B cell (primary cell): ENCODE measurements at regions of chr1 and their contacts with region 1.

Region 1: DNA sequence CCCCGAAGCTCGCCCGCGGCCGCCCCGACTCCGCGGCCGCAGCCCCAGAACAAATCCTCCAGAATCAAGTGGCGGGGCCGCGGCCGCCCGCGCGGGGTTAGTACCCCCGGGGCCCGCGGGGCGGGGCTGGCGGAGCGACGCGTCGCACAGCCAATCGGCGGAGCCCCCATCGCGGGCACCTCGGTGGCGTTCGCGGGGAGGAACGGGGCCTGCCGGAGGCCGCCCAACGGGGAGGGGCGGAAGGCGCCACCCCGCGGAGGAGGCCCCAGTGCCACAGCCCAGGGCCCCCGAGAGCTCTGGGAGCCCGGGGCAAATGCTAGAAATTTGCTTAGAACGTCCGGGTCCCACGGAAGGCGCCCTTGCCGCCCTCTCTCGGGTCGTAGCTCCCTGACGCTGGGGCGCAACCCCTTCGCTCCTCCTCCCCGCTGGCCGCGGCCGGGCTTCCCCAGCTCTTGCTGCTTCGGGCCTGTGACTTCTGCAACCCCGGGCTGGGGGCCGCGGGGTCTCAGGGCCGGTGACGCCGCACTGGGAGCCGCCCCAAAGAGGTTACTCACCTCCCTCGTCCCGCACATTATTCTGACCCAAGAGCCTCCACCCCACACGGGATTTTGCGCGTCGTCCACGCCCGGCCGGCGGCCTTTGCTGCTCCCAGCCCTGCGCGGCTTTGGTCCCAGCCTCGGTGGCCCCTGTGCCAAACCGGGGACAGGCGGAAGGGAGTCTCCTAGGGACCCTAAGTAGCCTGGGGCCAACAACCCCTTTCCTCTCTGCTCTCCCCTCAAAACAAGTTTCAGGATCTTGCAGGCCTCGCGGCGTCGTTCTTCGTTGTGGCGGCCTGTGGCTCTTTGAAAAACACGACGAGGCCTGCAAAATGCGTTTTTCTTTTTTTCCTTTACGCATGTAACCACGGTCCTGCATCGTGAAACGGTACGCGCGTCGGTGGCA is at the start of gene RUNX3:
- DNase-seq: peak; percentile 97
- ATAC-seq: peak; percentile 85
- H3K4me3 ChIP-seq: peak within 1 kb of the TSS; percentile 74 to 93 (median 78)
- H3K4me3 Mint-ChIP-seq: peak within 1 kb of the TSS; percentile 98
- H3K27ac ChIP-seq: peak within 1 kb of the TSS; percentile 95 to 97
- H3K27ac Mint-ChIP-seq: peak within 1 kb of the TSS; percentile 99
- H3K4me1 ChIP-seq: peaks cover 67 to 77% of the 10 kb centered on the region in 2 donors
- H3K4me1 Mint-ChIP-seq: peaks cover 72% of the 10 kb centered on the region
- H3K27me3 ChIP-seq: no peaks in the 10 kb centered on the region
- H3K27me3 Mint-ChIP-seq: no peaks in the 10 kb centered on the region
- CTCF ChIP-seq: no peak
- total RNA-seq, gene RUNX3: 116 and 127 TPM in 2 replicates

Region 2: DNA sequence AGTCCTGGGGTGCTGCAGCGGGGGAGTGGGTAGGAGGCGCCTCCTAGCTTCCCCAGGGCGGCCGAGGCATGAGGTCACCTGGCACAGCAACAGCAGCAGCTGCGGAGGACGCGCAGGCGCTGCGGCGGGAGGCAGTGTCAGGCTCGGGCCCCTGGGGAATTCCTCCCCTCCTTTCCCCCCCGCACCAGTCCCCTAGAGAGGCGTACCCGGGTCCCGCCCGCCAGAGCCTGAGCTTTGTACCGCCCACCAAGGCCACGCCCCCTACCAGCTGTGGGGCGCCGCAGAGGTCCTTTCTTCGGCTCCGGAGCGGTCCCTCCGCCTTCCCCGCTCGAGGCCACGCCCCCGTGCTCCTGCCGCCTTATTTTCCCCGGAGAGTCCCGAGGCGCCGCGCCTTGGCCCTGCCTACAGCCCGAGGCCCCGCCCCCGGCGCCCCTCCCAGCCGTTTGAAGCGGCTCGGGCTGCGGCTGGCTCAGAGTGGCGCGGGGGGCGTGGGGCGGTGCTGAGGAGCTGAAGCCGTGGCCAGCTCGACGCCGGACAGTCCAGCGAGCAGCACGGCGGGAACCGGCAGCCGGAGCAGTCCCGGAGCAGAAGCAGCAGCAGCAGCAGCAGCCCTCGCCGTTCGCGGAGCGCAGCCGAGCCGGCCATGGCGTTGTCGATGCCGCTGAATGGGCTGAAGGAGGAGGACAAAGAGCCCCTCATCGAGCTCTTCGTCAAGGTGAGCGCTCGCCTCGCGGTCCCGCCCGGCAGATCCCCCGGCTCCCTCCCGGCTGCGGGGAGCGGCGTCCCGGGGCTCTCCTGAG is 185.4 kb before region 1 on chr1 and contains the start of gene CLIC4:
- CTCF ChIA-PET with region 1: no interaction called
- POLR2A ChIA-PET with region 1: interaction called, 4 read pairs
- intact Hi-C with region 1: loop called (anchors 1 kb)
- DNase-seq: peak; percentile 100
- ATAC-seq: peak; percentile 78
- H3K4me3 ChIP-seq: peak within 1 kb of the TSS; percentile 79 to 99 (median 91)
- H3K4me3 Mint-ChIP-seq: peak within 1 kb of the TSS; percentile 94
- H3K27ac ChIP-seq: peak within 1 kb of the TSS; percentile 72 to 88
- H3K27ac Mint-ChIP-seq: peak within 1 kb of the TSS; percentile 99
- H3K4me1 ChIP-seq: peaks cover 63 to 82% of the 10 kb centered on the region in 2 donors
- H3K4me1 Mint-ChIP-seq: peaks cover 67% of the 10 kb centered on the region
- H3K27me3 ChIP-seq: no peaks in the 10 kb centered on the region
- H3K27me3 Mint-ChIP-seq: no peaks in the 10 kb centered on the region
- CTCF ChIP-seq: no peak
- total RNA-seq, gene CLIC4: 123 and 127 TPM in 2 replicates

Region 3: DNA sequence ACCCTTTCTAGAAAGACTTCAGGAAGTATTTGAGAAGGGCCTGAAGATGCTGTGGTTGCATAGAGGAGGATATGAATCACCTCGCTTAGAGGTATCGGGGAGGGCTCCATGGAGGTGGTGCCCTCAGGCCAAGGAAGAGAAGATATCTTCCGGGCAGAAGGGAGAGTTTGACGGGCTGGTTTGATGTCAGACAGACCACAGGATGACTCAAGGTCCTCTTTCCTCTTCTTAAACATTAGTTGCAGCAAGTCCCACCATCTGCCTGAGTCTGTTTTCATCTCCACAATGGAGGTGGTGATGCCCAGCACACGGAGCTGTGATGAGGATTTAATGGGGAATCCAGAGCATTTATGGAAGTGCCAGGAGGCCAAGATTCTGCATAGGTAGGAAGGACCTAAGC is 24.7 kb after region 1 on chr1:
- CTCF ChIA-PET with region 1: interaction called, 30 read pairs
- POLR2A ChIA-PET with region 1: interaction called, 5 read pairs
- intact Hi-C with region 1: loop called (anchors 2 kb)
- DNase-seq: no peak
- ATAC-seq: peak; percentile 67
- H3K4me3 ChIP-seq: no peak overlapping the region
- H3K4me3 Mint-ChIP-seq: peak overlapping the region; percentile 72
- H3K27ac ChIP-seq: no peak overlapping the region
- H3K27ac Mint-ChIP-seq: peak overlapping the region; percentile 76
- H3K4me1 ChIP-seq: peaks cover 48 to 76% of the 10 kb centered on the region in 2 donors
- H3K4me1 Mint-ChIP-seq: peaks cover 70% of the 10 kb centered on the region
- H3K27me3 ChIP-seq: no peaks in the 10 kb centered on the region
- H3K27me3 Mint-ChIP-seq: no peaks in the 10 kb centered on the region
- CTCF ChIP-seq: no peak

Region 4: DNA sequence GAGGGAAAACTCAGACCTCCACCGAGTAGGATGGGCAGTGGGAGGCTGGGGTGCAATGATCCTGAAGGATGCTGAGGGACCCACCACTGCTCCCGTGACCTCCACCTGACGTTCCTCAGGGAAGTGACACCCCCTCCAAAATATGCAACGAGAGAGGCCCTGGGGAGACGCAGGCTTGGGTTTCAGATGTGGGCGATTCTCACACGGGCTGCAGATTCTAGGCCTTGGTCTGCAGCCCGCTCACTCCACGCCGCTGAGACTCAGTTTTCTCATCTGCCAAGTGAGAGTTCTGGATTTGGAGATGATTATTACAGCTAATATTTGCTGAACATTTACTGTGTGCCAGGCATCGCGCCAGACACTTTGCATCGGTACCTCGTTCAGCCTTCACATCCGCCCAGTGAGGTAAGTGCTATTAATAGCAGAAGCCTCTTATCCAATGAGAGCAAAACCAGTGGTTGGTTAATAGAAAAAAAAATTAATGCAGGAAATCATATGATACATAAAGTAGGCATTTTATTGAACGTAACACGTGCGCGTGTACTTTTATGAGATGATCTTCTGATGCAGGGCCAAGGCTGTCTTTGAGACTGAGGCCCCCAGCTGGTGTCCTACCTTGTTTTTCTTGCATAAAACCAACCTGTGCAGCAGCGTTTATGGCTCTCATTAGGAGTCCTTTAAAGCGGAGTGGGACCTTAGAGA is 101.6 kb after region 1 on chr1:
- CTCF ChIA-PET with region 1: interaction called, 320 read pairs
- POLR2A ChIA-PET with region 1: interaction called, 14 read pairs
- intact Hi-C with region 1: loop called (anchors 1 kb)
- DNase-seq: peak; percentile 92
- ATAC-seq: peak; percentile 68
- H3K4me3 ChIP-seq: peak overlapping the region in 1 of 5 experiments; percentile 29
- H3K4me3 Mint-ChIP-seq: peak overlapping the region; percentile 89
- H3K27ac ChIP-seq: peak overlapping the region; percentile 82 to 89
- H3K27ac Mint-ChIP-seq: peak overlapping the region; percentile 98
- H3K4me1 ChIP-seq: peaks cover 77 to 92% of the 10 kb centered on the region in 2 donors
- H3K4me1 Mint-ChIP-seq: peaks cover 79% of the 10 kb centered on the region
- H3K27me3 ChIP-seq: no peaks in the 10 kb centered on the region
- H3K27me3 Mint-ChIP-seq: no peaks in the 10 kb centered on the region
- CTCF ChIP-seq: peak; percentile 38

Region 5: DNA sequence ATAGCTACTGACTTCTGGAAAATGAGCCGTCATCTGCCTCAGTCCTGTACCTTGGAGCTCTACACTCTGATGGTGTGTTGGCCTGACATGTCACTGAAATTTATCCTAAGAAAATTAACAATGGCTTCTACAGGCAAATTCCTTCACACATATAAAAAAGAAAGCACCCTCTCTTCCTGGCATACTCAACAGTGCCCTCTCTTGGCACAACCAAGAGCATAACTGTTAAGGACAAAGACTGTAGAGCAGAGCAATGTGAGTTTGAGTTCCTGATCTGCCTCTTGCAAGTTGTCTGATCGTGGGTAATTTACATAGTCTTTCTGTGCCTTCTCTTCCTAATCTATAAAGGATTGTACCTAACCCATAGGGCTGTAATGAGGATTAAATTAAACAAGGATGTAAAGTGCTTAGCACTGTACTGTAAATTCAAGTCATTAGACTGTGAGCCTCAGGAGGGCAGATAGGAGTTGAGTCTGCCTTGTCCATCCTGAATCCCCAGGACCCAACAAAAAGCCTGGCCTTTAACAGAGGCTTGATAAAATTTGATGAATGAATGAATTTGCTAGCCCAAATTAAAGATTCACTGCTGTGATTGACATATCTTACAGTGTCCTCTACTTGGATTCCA is 218.3 kb after region 1 on chr1:
- CTCF ChIA-PET with region 1: no interaction called
- POLR2A ChIA-PET with region 1: no interaction called
- intact Hi-C with region 1: loop called (anchors 2 kb)
- DNase-seq: peak; percentile 51
- ATAC-seq: peak; percentile 43
- H3K4me3 ChIP-seq: no peak overlapping the region
- H3K4me3 Mint-ChIP-seq: no peak overlapping the region
- H3K27ac ChIP-seq: no peak overlapping the region
- H3K27ac Mint-ChIP-seq: no peak overlapping the region
- H3K4me1 ChIP-seq: peaks cover 9 to 14% of the 10 kb centered on the region in 2 donors
- H3K4me1 Mint-ChIP-seq: peaks cover 12% of the 10 kb centered on the region
- H3K27me3 ChIP-seq: peaks cover 0 to 6% (median 5%) of the 10 kb centered on the region in 4 experiments
- H3K27me3 Mint-ChIP-seq: peaks cover 33% of the 10 kb centered on the region
- CTCF ChIP-seq: peak; percentile 58